Panc1 (cell line): ENCODE measurements at regions of chr10 and their contacts with region 1.

Region 1: GRCh38 chr10:72605122-72605521 is 20.8 kb downstream of the MICU1 start:
- DNase-seq: no peak
- ATAC-seq: no peak
- H3K4me3 ChIP-seq: no peak overlapping the region
- H3K27ac ChIP-seq: no peak overlapping the region
- H3K4me1 ChIP-seq: no peaks in the 10 kb centered on the region
- H3K27me3 ChIP-seq: no peaks in the 10 kb centered on the region
- CTCF ChIP-seq: no peak

Region 2: DNA sequence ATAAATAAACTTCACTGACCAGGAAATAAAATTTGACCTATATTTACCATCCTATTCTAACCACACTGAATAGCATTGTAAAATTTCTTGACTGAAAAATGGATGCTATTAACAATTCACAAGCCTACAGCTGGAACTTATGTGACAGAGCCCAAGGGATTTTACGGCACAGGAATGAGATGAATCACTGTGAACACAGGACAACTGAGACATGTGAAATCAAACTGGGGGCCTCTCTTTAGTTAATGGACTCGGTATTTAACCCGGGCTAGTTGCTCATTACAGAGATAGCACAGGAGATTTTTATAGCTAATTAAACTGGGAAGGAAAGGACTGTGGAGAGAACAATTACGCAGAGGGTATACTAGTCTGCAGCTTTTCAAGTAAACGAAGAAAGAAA is 79.8 kb before region 1 on chr10:
- CTCF ChIA-PET with region 1: no interaction called
- POLR2A ChIA-PET with region 1: interaction called, 14 read pairs
- in situ Hi-C with region 1: no loop called
- intact Hi-C with region 1: no loop called
- DNase-seq: no peak
- ATAC-seq: 0 out of 2 replicates have a peak, but pooled peaks have one; percentile 21
- H3K4me3 ChIP-seq: no peak overlapping the region
- H3K27ac ChIP-seq: no peak overlapping the region
- H3K4me1 ChIP-seq: 0 out of 2 replicates have a peak, but pooled peaks cover 4% of the 10 kb centered on the region
- H3K27me3 ChIP-seq: no peaks in the 10 kb centered on the region
- CTCF ChIP-seq: no peak

Region 3: GRCh38 chr10:74035303-74035702 is 1430.2 kb after region 1 on chr10:
- CTCF ChIA-PET with region 1: no interaction called
- POLR2A ChIA-PET with region 1: interaction called, 11 read pairs
- in situ Hi-C with region 1: no loop called
- intact Hi-C with region 1: no loop called
- DNase-seq: no peak
- ATAC-seq: no peak
- H3K4me3 ChIP-seq: no peak overlapping the region
- H3K27ac ChIP-seq: no peak overlapping the region
- H3K4me1 ChIP-seq: peaks cover 51% of the 10 kb centered on the region
- H3K27me3 ChIP-seq: no peaks in the 10 kb centered on the region
- CTCF ChIP-seq: no peak